H1 (cell line): ENCODE measurements at regions of chr12 and their contacts with region 1.

Region 1: GRCh38 chr12:5556039-5556614 is 124.2 kb downstream of the NTF3 start:
- DNase-seq: peak in 1 of 2 experiments; percentile 88
- H3K4me3 ChIP-seq: no peak overlapping the region
- H3K27ac ChIP-seq: no peak overlapping the region
- H3K4me1 ChIP-seq: peaks cover 0 to 3% (median 0%) of the 10 kb centered on the region in 4 experiments; a peak in 2 of 7 replicates
- H3K27me3 ChIP-seq: no peaks in the 10 kb centered on the region
- CTCF ChIP-seq: peak; percentile 73 to 79 (median 76)
- EP300 ChIP-seq: no peak
- POLR2A ChIP-seq: no peak
- RAD21 ChIP-seq: peak; percentile 64 to 75

Region 2: DNA sequence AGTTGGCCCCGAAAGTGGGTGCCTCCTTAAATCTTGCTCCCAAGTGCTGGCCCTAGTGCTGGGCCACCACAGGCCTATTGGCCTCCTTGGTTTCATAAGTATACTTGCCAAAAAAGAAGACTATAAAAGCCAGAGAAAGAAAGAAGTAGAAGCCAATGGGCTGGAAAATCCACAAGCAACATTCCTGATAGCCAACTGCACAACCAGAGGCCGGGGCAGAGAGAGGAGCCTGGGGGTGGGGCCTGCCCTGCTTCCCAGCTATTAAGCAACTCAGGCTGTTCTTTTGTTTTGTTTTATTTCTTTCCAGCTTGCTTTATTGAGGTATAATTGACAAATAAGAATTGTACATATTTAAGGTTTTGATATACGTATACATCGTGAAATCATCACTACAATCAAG is 301.4 kb before region 1 on chr12:
- CTCF ChIA-PET with region 1: no interaction called
- POLR2A ChIA-PET with region 1: no interaction called
- DNase-seq: no peak
- H3K4me3 ChIP-seq: no peak overlapping the region
- H3K27ac ChIP-seq: no peak overlapping the region
- H3K4me1 ChIP-seq: peaks cover 3 to 10% (median 8%) of the 10 kb centered on the region in 4 experiments
- H3K27me3 ChIP-seq: no peaks in the 10 kb centered on the region
- CTCF ChIP-seq: no peak
- EP300 ChIP-seq: no peak
- POLR2A ChIP-seq: no peak
- RAD21 ChIP-seq: no peak

Region 3: GRCh38 chr12:5395443-5396271 is 160.5 kb before region 1 on chr12:
- CTCF ChIA-PET with region 1: no interaction called
- POLR2A ChIA-PET with region 1: no interaction called
- DNase-seq: no peak
- H3K4me3 ChIP-seq: no peak overlapping the region
- H3K27ac ChIP-seq: no peak overlapping the region
- H3K4me1 ChIP-seq: peaks cover 0 to 4% (median 2%) of the 10 kb centered on the region in 4 experiments; a peak in 3 of 7 replicates
- H3K27me3 ChIP-seq: no peaks in the 10 kb centered on the region; a peak in 1 of 7 replicates
- CTCF ChIP-seq: no peak
- EP300 ChIP-seq: no peak
- POLR2A ChIP-seq: no peak
- RAD21 ChIP-seq: no peak

Region 4: DNA sequence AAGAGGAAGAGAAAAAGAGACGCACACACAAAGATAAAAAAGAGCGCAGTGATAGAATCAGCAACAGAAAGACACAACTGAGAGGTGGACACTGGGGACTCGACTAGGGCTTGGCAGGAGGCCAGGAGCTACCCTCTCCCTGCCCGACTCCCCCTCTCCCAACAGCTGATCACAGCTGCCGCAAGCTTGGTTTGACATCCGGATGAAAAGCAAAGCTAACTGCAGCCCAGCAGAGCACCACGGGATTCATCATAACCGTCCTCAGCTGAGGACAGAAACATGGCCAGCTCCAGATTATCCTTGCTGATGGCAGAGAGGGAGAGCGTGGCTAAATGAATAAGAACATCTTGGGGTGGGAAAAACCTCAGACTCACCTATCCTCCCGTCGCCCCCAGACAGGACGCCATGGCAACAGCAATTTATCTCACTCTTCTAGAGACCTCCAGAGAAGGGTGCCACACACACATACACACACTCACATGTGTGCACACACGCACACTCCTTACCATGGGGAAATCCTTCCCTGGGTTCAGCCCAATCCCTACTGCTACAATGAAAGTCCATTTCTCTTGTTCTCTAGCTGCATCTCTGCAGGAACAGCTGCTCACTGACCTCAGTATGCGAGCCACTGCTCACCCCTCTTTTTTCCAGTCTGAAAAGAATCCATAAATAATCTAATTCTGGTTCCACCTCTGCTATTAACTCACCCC is 11.0 kb after region 1 on chr12:
- CTCF ChIA-PET with region 1: interaction called, 33 read pairs
- POLR2A ChIA-PET with region 1: no interaction called
- DNase-seq: no peak
- H3K4me3 ChIP-seq: no peak overlapping the region
- H3K27ac ChIP-seq: no peak overlapping the region
- H3K4me1 ChIP-seq: no peaks in the 10 kb centered on the region
- H3K27me3 ChIP-seq: no peaks in the 10 kb centered on the region
- CTCF ChIP-seq: no peak
- EP300 ChIP-seq: no peak
- POLR2A ChIP-seq: no peak
- RAD21 ChIP-seq: no peak

Region 5: DNA sequence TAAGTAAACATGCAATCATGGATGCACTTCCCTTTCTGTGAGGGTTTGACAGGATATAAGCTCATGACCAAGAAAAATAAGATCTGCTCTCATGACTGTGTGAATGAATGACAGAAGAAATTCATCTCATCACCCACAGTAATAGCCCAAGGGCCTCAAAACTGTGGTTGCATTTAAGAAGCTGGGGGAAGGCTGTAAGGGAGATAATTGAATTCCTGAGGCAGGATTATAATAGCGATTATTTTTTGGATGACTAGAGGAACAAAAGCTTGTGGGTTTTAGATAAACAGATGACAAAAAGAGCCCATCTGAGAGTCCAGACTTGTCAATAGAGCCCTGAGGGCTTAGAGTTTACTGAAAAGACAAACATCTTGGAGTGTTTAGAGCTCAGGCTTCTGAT is 37.0 kb after region 1 on chr12:
- CTCF ChIA-PET with region 1: no interaction called
- POLR2A ChIA-PET with region 1: no interaction called
- DNase-seq: no peak
- H3K4me3 ChIP-seq: no peak overlapping the region
- H3K27ac ChIP-seq: no peak overlapping the region
- H3K4me1 ChIP-seq: peaks cover 3 to 14% (median 4%) of the 10 kb centered on the region in 4 experiments; a peak in 5 of 7 replicates
- H3K27me3 ChIP-seq: peaks cover 0 to 2% (median 0%) of the 10 kb centered on the region in 4 experiments; a peak in 1 of 7 replicates
- CTCF ChIP-seq: no peak
- EP300 ChIP-seq: no peak
- POLR2A ChIP-seq: no peak
- RAD21 ChIP-seq: no peak